Naive thymus-derived CD4-positive, alpha-beta T cell (primary cell): ENCODE measurements at regions of chr1 and their contacts with region 1.

Region 1: GRCh38 chr1:206684478-206685333 is at the start of gene MAPKAPK2:
- DNase-seq: peak; percentile 52 to 80 (median 71)
- ATAC-seq: peak; percentile 85
- H3K4me3 ChIP-seq: peak within 1 kb of the TSS; percentile 66
- H3K4me3 Mint-ChIP-seq: peak within 1 kb of the TSS; percentile 92 to 100 (median 96)
- H3K27ac ChIP-seq: peak within 1 kb of the TSS; percentile 90
- H3K27ac Mint-ChIP-seq: peak within 1 kb of the TSS; percentile 90 to 98 (median 95)
- H3K4me1 ChIP-seq: peaks cover 12 to 21% of the 10 kb centered on the region in 2 donors
- H3K4me1 Mint-ChIP-seq: peaks cover 23 to 49% (median 38%) of the 10 kb centered on the region in 7 donors
- H3K27me3 ChIP-seq: no peaks in the 10 kb centered on the region
- H3K27me3 Mint-ChIP-seq: peaks cover 0 to 17% (median 0%) of the 10 kb centered on the region in 5 donors
- total RNA-seq, gene MAPKAPK2: 49.6 to 123 (median 80.5) TPM

Region 2: DNA sequence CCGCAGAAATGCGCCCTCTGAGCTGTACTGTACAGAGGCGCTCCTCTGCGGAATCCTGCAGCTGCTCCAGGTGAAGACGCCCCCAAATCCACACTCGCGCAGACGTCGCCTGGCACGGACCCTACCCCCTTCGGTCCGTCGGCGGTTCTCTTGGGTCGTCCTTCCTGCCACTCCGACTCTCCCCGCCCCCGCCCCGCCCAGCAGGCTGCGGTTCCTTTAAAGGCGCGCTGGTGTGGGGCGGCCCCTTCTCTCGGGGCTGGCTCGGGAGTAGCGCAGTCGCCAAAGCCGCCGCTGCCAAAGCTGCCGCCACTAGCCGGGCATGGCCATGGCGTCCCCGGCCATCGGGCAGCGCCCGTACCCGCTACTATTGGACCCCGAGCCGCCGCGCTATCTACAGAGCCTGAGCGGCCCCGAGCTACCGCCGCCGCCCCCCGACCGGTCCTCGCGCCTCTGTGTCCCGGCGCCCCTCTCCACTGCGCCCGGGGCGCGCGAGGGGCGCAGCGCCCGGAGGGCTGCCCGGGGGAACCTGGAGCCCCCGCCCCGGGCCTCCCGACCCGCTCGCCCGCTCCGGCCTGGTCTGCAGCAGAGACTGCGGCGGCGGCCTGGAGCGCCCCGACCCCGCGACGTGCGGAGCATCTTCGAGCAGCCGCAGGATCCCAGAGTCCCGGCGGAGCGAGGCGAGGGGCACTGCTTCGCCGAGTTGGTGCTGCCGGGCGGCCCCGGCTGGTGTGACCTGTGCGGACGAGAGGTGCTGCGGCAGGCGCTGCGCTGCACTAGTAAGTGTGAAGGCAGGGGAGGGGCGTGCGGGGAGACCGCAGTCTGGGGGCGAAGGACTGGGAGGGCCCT is 177.2 kb before region 1 on chr1 and contains the start of gene RASSF5:
- CTCF ChIA-PET with region 1: no interaction called
- POLR2A ChIA-PET with region 1: no interaction called
- intact Hi-C with region 1: loop called (anchors 1 kb)
- DNase-seq: peak; percentile 64 to 86 (median 74)
- ATAC-seq: peak; percentile 88
- H3K4me3 ChIP-seq: peak within 1 kb of the TSS; percentile 58
- H3K4me3 Mint-ChIP-seq: peak within 1 kb of the TSS; percentile 72 to 90 (median 82)
- H3K27ac ChIP-seq: peak within 1 kb of the TSS; percentile 41
- H3K27ac Mint-ChIP-seq: peak within 1 kb of the TSS in 8 of 9 donors; percentile 28 to 69 (median 51)
- H3K4me1 ChIP-seq: peaks cover 8 to 29% of the 10 kb centered on the region in 2 donors
- H3K4me1 Mint-ChIP-seq: peaks cover 8 to 59% (median 29%) of the 10 kb centered on the region in 7 donors
- H3K27me3 ChIP-seq: no peaks in the 10 kb centered on the region
- H3K27me3 Mint-ChIP-seq: peaks cover 12 to 30% (median 18%) of the 10 kb centered on the region in 5 donors
- total RNA-seq, gene RASSF5: 155 to 240 (median 218) TPM

Region 3: GRCh38 chr1:206600527-206600926 is 84.2 kb before region 1 on chr1:
- CTCF ChIA-PET with region 1: no interaction called
- POLR2A ChIA-PET with region 1: no interaction called
- intact Hi-C with region 1: no loop called
- DNase-seq: no peak
- ATAC-seq: no peak
- H3K4me3 ChIP-seq: no peak overlapping the region
- H3K4me3 Mint-ChIP-seq: no peak overlapping the region
- H3K27ac ChIP-seq: no peak overlapping the region
- H3K27ac Mint-ChIP-seq: no peak overlapping the region
- H3K4me1 ChIP-seq: no peaks in the 10 kb centered on the region
- H3K4me1 Mint-ChIP-seq: peaks cover 0 to 4% (median 0%) of the 10 kb centered on the region in 7 donors
- H3K27me3 ChIP-seq: no peaks in the 10 kb centered on the region
- H3K27me3 Mint-ChIP-seq: no peaks in the 10 kb centered on the region

Region 4: DNA sequence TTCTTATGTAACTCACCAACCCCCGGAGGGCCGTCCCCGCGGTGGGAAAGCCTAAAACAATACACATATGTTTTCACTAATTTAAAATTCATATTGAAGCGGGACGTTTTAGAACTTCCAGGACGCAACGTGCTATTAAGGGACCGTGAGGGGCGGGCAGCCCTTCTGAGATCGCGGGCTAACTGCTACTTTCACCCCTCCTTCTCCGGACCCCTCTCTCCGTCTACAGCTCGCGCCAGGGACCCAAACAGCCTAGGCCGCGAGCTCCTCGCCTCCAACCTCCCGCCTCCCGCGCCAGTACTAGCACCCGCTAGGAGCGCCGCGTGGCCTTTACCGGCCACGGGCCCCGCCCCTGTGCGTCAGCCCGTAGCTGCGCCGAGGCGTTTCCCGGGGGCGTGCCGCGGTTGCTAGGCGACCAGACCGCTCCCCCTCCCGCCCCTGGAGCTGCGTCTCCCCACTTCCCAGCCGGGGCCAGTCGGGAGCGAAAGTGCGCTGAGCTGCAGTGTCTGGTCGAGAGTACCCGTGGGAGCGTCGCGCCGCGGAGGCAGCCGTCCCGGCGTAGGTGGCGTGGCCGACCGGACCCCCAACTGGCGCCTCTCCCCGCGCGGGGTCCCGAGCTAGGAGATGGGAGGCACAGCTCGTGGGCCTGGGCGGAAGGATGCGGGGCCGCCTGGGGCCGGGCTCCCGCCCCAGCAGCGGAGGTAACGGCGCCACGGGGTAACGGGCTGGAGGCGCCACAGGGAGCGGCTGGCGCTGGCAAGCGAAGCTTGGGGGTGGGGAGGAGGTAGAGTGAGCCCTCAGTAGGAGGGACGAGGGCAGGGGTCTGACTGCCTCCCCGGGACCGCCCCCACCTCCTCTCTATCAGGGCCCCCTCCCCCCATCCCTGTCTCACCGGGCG is 49.4 kb before region 1 on chr1 and contains the start of gene DYRK3:
- CTCF ChIA-PET with region 1: interaction called, 3 read pairs
- POLR2A ChIA-PET with region 1: no interaction called
- intact Hi-C with region 1: loop called (anchors 1 kb)
- DNase-seq: peak; percentile 71 to 98 (median 80)
- ATAC-seq: peak; percentile 97
- H3K4me3 ChIP-seq: peak within 1 kb of the TSS; percentile 67
- H3K4me3 Mint-ChIP-seq: peak within 1 kb of the TSS; percentile 85 to 96 (median 90)
- H3K27ac ChIP-seq: peak within 1 kb of the TSS; percentile 57
- H3K27ac Mint-ChIP-seq: peak within 1 kb of the TSS; percentile 64 to 93 (median 85)
- H3K4me1 ChIP-seq: peaks cover 8 to 16% of the 10 kb centered on the region in 2 donors
- H3K4me1 Mint-ChIP-seq: peaks cover 14 to 29% (median 18%) of the 10 kb centered on the region in 7 donors
- H3K27me3 ChIP-seq: no peaks in the 10 kb centered on the region
- H3K27me3 Mint-ChIP-seq: peaks cover 7 to 13% (median 9%) of the 10 kb centered on the region in 5 donors
- total RNA-seq, gene DYRK3: 0.22 to 8.2 (median 0.69) TPM

Region 5: DNA sequence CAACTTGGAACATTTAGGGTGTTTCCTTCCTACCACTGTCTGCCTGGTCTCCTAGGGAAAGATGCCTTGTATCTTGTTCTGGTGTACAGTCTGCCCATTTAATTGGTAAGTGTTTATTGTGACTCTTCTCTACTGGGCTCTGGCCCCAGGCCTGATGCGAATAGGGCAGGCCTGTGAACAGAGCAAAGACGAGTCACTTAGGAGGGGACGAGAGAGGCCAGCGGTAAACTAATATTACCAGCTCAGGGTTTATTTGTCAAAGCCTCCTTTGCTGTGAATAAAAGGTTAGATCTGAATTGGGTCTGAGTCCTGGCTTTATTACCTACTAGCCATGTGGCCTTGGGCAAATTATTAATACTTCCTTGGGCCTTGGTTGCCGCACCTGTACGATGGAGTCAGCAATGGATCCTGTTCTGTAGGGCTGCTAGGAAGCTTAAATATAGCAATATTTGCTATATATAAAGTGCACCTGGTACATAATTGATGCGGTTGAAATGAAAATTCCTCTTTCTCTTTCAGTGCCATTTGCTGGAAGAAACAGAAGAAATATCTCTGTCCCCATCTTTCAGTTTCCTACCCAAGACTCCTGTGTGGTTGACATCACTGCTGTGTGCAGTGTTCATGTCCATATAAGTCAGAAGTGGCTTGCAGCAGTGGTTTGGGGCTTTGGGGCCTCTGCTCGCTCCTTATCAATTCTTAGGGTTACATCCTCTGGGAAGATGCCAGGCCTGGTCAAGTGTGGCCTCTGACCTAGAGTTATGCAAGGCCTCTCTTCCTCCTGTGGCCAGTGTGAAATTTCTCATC is 32.4 kb after region 1 on chr1:
- CTCF ChIA-PET with region 1: no interaction called
- POLR2A ChIA-PET with region 1: no interaction called
- intact Hi-C with region 1: loop called in 1 of 2 experiments (anchors 1 kb)
- DNase-seq: no peak
- ATAC-seq: peak; percentile 32
- H3K4me3 ChIP-seq: no peak overlapping the region
- H3K4me3 Mint-ChIP-seq: peak overlapping the region; percentile 32 to 72 (median 54)
- H3K27ac ChIP-seq: no peak overlapping the region
- H3K27ac Mint-ChIP-seq: peak overlapping the region; percentile 15 to 89 (median 67)
- H3K4me1 ChIP-seq: peaks cover 30 to 69% of the 10 kb centered on the region in 2 donors
- H3K4me1 Mint-ChIP-seq: peaks cover 65 to 87% (median 79%) of the 10 kb centered on the region in 7 donors
- H3K27me3 ChIP-seq: no peaks in the 10 kb centered on the region
- H3K27me3 Mint-ChIP-seq: no peaks in the 10 kb centered on the region